ENCODE measurements at regions of chr17 and their contacts with region 1.

Region 1: DNA sequence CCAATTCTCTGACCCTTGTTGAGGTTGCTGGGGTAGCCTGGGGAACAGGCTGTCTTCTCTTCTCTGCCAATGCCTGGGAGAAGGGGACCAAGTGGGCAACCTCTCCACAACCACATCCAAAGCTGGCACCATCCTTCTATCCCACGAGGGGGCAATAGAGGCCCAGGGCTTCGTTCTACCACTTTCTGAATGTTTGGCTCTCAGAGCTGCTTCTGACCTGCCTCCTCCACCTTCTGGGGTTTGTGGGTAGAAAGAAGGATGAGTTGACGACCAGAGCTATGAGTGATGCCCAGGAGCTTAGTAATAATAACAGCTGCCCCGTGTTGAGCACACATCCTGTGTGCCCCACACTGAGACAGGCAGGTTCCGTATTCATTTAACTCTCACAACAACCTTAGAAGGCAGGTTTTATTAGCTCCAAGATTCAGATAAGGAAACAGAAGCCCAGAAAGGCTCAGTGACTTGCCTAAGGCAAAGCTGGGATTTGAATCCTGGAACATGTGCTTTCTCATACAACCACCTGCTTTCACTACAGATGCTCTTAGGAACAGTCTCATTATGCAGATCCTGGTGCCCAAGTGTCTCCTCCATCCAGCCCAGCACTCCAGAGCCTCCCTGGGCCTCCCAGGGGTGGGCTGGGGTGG is 11.1 kb downstream of the TSPOAP1 start:
- DNase-seq: peak; percentile 81
- H3K4me3 ChIP-seq: no peak overlapping the region
- H3K27ac ChIP-seq: no peak overlapping the region
- H3K4me1 ChIP-seq: no peaks in the 10 kb centered on the region
- H3K27me3 ChIP-seq: no peaks in the 10 kb centered on the region
- CTCF ChIP-seq: peak; percentile 74
- EP300 ChIP-seq: no peak
- RAD21 ChIP-seq: peak; percentile 83

Region 2: DNA sequence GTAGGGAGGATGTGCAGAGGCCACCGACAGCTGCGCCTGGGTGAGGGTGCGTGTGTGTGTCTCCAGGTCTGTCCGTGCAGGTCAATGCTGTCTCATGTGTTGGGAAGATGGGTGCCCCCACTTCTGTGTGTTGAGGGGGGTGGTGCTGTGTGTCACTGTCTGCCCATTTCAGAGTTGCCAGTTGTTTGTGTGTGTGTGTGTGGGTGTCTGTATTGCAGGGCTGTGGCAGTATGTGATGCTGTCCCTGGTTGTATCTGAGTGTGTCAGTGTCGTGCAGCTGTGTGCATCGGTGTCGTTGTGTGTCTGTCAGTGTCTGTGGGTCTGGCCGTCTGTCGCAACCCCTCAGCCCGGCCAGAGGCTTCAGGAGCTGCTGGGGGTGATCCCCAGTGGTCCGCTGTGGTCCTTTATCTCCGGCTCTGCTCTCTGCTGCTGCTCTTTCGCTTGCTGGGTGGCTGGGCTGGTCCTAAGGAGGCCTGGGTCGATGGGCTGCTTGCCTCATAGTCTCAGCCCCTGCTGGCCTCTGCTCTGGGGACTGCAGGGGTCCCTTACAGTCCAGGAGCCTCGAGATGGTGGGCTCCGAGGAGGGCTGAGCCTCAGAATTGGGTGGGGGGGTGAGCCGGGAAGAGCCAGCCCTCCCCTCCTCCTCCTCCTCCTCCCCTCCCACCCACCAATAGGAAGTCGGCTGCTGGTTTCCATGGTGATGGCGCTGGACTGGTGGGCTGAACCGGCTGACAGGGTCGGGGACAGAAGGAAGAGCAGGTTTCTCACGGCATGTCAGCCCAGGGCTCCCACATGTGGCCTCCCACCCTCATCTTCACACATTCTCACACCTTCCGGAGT is 10.9 kb after region 1 on chr17 and contains the start of gene TSPOAP1:
- CTCF ChIA-PET with region 1: interaction called, 14 read pairs
- POLR2A ChIA-PET with region 1: interaction called, 5 read pairs
- DNase-seq: peak; percentile 95
- H3K4me3 ChIP-seq: peak within 1 kb of the TSS in 1 of 2 experiments; percentile 23; a peak in 1 of 4 replicates
- H3K27ac ChIP-seq: peak within 1 kb of the TSS in 1 of 2 experiments; percentile 7; a peak in 1 of 4 replicates
- H3K4me1 ChIP-seq: peaks cover 0 to 35% of the 10 kb centered on the region in 2 experiments; a peak in 1 of 4 replicates
- H3K27me3 ChIP-seq: peaks cover 21% of the 10 kb centered on the region; the same call in 1 of the 2 replicates
- CTCF ChIP-seq: no peak
- EP300 ChIP-seq: no peak
- RAD21 ChIP-seq: no peak
- polyA plus RNA-seq, gene TSPOAP1: 0.79 and 1.9 TPM in 2 replicates

Region 3: GRCh38 chr17:58352014-58352842 is 34.7 kb after region 1 on chr17 and contains the start of gene SUPT4H1:
- CTCF ChIA-PET with region 1: interaction called, 13 read pairs
- POLR2A ChIA-PET with region 1: interaction called, 57 read pairs
- DNase-seq: peak; percentile 99
- H3K4me3 ChIP-seq: peak within 1 kb of the TSS; percentile 74 to 99
- H3K27ac ChIP-seq: peak within 1 kb of the TSS; percentile 69 to 80
- H3K4me1 ChIP-seq: peaks cover 0 to 10% of the 10 kb centered on the region in 2 experiments; a peak in 2 of 4 replicates
- H3K27me3 ChIP-seq: no peaks in the 10 kb centered on the region
- CTCF ChIP-seq: no peak
- EP300 ChIP-seq: peak; percentile 1 to 51; a peak in 1 of 4 replicates
- RAD21 ChIP-seq: no peak
- polyA plus RNA-seq, gene SUPT4H1: 165 and 205 TPM in 2 replicates

Region 4: DNA sequence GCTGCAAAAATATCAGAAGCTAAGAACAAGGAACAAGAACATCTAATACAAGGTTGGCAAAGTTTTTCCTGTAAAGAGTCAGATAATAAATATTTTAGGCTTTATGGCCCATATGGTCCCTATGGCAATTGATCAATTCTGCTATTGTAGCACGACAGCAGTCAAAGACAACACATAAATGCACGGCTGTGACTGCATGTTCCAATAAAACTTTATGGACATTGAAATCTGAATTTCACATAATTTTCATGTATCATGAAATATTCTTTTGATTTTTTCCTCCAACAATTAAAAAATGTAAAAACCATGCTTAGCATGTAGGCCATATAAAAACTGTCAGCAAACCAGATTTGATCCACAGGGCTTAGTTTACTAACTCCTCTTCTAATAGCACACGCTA is 110.3 kb after region 1 on chr17:
- CTCF ChIA-PET with region 1: interaction called, 19 read pairs
- POLR2A ChIA-PET with region 1: no interaction called
- DNase-seq: no peak
- H3K4me3 ChIP-seq: no peak overlapping the region
- H3K27ac ChIP-seq: no peak overlapping the region
- H3K4me1 ChIP-seq: no peaks in the 10 kb centered on the region
- H3K27me3 ChIP-seq: peaks cover 4% of the 10 kb centered on the region; the same call in 1 of the 2 replicates
- CTCF ChIP-seq: no peak
- EP300 ChIP-seq: no peak
- RAD21 ChIP-seq: no peak